Activated CD8-positive, alpha-beta T cell treated with anti-CD3 and anti-CD28 coated beads for 36 hours (primary cell): ENCODE measurements at regions of chr19 and their contacts with region 1.

Region 1: DNA sequence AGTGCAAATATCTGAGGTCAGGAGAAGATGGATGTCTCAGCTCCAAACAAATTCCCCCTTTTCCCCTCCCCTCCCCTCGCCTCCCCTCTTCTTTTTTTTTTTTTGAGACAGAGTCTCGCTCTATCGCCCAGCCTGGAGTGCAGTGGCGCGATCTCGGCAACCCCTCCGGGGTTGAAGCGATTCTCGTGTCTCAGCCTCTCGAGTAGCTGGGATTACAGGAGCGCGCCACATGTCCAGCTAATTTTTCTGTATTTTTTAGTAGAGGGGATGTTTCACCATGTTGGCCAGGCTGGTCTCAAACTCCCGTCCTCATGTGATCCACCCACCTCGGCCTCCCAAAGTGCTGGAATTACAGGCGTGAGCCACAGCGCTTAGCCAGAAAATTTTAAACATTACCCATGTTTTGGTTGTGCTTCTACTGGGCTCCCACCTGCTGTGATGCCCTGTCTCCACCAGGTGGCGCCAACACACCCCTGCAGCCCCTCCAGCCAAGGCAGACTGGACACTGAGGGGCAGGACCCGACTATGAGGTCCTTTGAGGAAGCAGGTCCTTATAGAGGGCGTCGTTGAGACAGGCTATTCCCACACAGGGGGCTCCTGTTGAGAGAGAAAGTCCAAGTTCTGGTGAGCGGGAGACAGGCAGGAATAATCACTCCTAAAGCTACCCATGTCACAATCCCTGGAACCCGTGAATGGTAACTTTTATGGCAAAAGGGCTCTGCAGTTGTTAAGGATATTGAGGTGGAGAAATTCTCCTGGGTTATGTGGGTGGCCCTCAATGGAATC is 6.3 kb downstream of the ERICH4 start:
- DNase-seq: peak; percentile 79
- ATAC-seq: peak; percentile 96
- H3K4me3 Mint-ChIP-seq: peak overlapping the region; percentile 62
- H3K27ac Mint-ChIP-seq: no peak overlapping the region
- H3K4me1 Mint-ChIP-seq: no peaks in the 10 kb centered on the region
- H3K27me3 Mint-ChIP-seq: peaks cover 9% of the 10 kb centered on the region
- CTCF ChIP-seq: peak; percentile 97

Region 2: DNA sequence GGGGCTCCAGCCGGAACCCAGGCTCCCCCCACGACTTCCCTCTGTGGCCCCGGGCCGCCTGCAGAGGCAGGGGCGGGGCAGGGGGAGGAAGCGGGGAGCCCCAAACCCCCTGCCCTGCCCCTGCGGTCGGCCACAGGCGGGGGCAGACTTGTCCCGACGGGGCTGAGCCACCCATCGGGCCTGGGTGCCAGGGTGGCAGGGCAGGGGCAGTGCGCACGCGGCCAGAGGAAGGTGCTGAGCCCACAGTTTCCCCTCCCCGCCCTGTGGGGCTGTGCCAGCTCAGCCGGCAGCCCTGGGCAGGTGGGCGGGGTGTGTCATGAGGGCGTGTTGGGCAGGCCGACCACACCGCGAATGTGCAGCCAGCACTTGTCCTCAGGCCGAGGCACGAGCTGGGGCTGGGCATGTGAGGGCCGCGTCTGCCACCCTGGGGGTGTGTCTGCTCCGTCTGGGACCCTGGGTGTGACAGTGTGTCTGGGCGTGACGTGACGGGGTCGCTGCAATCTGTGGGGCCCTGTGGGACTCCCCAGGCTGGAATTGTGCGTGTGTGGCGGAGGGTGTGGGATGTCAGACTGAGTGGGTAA is 121.6 kb before region 1 on chr19:
- CTCF ChIA-PET with region 1: no interaction called
- POLR2A ChIA-PET with region 1: no interaction called
- intact Hi-C with region 1: no loop called
- DNase-seq: peak; percentile 94
- ATAC-seq: peak; percentile 73
- H3K4me3 Mint-ChIP-seq: peak overlapping the region; percentile 65
- H3K27ac Mint-ChIP-seq: peak overlapping the region; percentile 96
- H3K4me1 Mint-ChIP-seq: peaks cover 68% of the 10 kb centered on the region
- H3K27me3 Mint-ChIP-seq: no peaks in the 10 kb centered on the region
- CTCF ChIP-seq: no peak

Region 3: DNA sequence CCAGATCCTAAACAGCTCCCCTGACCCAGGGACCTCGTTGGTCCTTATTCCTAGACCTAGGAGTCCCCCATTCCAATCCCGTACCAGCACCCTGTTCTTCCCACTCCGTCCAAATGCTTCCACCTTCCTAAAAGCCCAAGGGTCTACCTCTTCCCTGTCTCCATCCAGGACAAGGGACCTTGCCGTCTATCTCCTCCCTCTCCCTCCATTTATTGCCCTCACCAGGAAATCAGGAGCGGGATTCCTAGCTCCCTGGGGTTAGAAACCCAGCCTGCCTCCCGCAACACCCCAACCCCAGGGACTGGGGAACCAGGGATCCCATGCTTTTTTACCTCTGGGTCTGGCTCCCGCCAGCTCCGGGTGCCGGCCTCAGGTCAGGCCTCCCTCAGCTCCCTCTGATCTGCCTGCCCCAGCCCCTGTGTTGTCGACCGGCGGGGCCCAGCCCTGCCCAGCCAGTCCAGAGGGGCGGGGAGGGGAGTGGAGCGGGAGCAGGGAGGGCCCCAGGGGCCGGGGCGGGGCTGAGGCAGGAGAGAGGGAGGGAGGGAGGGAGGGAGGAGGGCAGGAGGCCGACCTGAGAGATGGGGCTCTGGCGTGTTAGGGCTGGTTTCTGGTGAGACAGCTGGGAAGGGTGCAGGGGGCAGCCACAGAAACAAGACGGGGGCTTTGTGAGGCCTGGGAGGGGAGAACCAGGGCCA is 22.2 kb before region 1 on chr19 and contains the start of gene B3GNT8:
- CTCF ChIA-PET with region 1: interaction called, 17 read pairs
- POLR2A ChIA-PET with region 1: no interaction called
- intact Hi-C with region 1: no loop called
- DNase-seq: peak; percentile 73
- ATAC-seq: peak; percentile 83
- H3K4me3 Mint-ChIP-seq: peak within 1 kb of the TSS; percentile 71
- H3K27ac Mint-ChIP-seq: peak within 1 kb of the TSS; percentile 86
- H3K4me1 Mint-ChIP-seq: peaks cover 24% of the 10 kb centered on the region
- H3K27me3 Mint-ChIP-seq: no peaks in the 10 kb centered on the region
- CTCF ChIP-seq: no peak
- total RNA-seq, gene B3GNT8: 0.59 to 1.1 TPM

Region 4: DNA sequence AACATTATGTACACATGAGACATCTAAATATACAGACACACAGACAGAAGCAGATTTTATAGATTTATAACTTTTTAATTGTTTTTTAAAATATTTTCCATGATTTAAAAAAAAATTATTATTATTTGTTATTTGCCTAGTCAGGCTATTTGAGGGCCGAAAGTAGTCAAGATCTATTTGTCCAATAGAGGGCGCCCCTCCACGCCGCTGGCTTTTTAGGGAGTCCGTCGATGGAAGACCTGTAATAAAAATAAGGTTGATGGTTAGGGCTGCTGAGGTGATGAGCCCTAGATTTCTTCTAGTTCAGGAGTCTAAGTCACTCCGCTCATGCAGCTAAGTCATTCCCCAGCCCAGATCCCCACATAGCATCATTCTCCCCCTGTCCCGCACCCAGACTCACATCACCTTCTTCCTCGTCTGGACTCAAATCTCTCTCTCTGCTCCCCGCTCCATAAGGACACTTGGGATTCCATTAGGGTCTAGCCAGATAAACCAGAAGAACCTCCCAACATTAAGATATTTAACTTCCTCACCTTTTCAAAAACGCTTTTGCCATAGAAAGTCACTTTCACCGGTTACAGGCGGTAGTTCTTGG is 92.8 kb after region 1 on chr19:
- CTCF ChIA-PET with region 1: interaction called, 21 read pairs
- POLR2A ChIA-PET with region 1: interaction called, 3 read pairs
- intact Hi-C with region 1: no loop called
- DNase-seq: peak; percentile 88
- ATAC-seq: peak; percentile 9
- H3K4me3 Mint-ChIP-seq: peak overlapping the region; percentile 7
- H3K27ac Mint-ChIP-seq: peak overlapping the region; percentile 64
- H3K4me1 Mint-ChIP-seq: peaks cover 51% of the 10 kb centered on the region
- H3K27me3 Mint-ChIP-seq: peaks cover 5% of the 10 kb centered on the region
- CTCF ChIP-seq: peak; percentile 74

Region 5: GRCh38 chr19:41570639-41571112 is 121.4 kb after region 1 on chr19:
- CTCF ChIA-PET with region 1: interaction called, 272 read pairs
- POLR2A ChIA-PET with region 1: interaction called, 3 read pairs
- intact Hi-C with region 1: loop called (anchors 5 kb)
- DNase-seq: peak; percentile 92
- ATAC-seq: peak; percentile 96
- H3K4me3 Mint-ChIP-seq: no peak overlapping the region
- H3K27ac Mint-ChIP-seq: no peak overlapping the region
- H3K4me1 Mint-ChIP-seq: peaks cover 18% of the 10 kb centered on the region
- H3K27me3 Mint-ChIP-seq: peaks cover 9% of the 10 kb centered on the region
- CTCF ChIP-seq: peak; percentile 95

Region 6: DNA sequence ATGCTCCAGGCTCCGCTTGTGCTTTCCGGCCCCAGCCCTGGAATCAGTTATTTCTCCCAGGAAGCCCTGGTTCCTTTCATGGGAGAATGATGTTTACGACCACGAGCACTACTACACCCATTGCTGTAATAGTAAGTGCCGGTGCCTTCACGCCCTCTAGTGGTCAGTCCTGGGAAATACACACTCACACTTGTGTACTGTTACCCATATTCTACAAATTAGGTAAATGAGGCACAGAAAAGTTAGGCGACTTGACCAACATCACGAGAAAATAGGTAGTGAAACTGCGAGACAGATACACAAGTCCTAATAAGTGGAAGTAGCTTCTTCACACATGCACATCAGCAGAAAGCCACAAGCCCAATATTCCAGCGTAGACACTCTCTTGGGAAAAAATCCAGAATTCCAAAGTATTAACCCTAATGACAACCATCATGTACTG is 148.3 kb after region 1 on chr19:
- CTCF ChIA-PET with region 1: interaction called, 37 read pairs
- POLR2A ChIA-PET with region 1: no interaction called
- intact Hi-C with region 1: no loop called
- DNase-seq: peak; percentile 89
- ATAC-seq: peak; percentile 87
- H3K4me3 Mint-ChIP-seq: no peak overlapping the region
- H3K27ac Mint-ChIP-seq: no peak overlapping the region
- H3K4me1 Mint-ChIP-seq: peaks cover 7% of the 10 kb centered on the region
- H3K27me3 Mint-ChIP-seq: peaks cover 26% of the 10 kb centered on the region
- CTCF ChIP-seq: peak; percentile 95